ENCODE measurements at regions of chr2 and their contacts with region 1.

Region 1: GRCh38 chr2:27715318-27716210 is 51.9 kb downstream of the SLC4A1AP start:
- DNase-seq: peak; percentile 89

Region 2: DNA sequence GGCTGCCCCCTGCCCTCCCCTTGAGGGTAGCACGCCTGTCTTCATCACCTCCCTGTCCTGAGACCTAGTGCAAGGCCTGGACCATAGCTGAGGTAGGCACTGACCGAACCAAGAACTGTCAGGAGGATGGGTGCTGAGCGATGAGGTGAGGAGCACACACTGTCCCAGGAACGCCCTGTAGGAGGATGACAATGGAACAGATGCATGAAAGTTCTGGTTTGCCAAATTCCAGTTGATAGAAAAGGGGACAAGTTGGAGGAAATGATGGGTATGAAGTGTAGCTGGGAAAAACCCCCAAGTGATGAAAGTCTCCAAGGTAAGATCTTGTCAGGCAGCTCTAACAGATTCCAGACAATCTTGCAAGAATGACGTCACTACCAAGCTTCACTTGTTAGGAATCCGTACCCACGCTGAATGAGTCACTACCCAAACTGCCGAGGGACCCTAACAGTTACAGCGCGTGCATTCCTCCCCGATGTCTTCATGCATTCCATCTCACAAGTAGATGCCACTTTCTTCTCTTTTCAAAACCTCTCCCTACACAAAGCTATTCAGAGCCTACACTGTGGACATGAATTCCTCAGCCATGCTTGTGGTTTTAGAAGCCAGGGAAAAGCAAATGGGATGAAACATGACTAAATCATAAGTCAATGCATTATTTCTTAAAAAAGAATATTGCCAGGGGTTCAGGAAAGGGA is 83.5 kb after region 1 on chr2:
- intact Hi-C with region 1: loop called in 1 of 2 experiments (anchors 5 kb)
- DNase-seq: peak; percentile 88

Measured in posterior vena cava (tissue), 2 donors.